ENCODE measurements at regions of chr22 and their contacts with region 1.

Region 1: GRCh38 chr22:37121887-37122591 is 12.5 kb upstream of the TMPRSS6 start:
- DNase-seq: peak; percentile 96
- ATAC-seq: peak; percentile 94
- H3K4me3 Mint-ChIP-seq: peak overlapping the region; percentile 79
- H3K27ac Mint-ChIP-seq: peak overlapping the region; percentile 98
- H3K4me1 Mint-ChIP-seq: peaks cover 76% of the 10 kb centered on the region
- H3K27me3 Mint-ChIP-seq: no peaks in the 10 kb centered on the region

Region 2: GRCh38 chr22:37060801-37061610 is 61.0 kb before region 1 on chr22:
- CTCF ChIA-PET with region 1: no interaction called
- POLR2A ChIA-PET with region 1: interaction called, 3 read pairs
- intact Hi-C with region 1: loop called in 1 of 2 experiments (anchors 1 kb)
- DNase-seq: peak; percentile 90
- ATAC-seq: peak; percentile 85
- H3K4me3 Mint-ChIP-seq: peak overlapping the region; percentile 66
- H3K27ac Mint-ChIP-seq: peak overlapping the region; percentile 80
- H3K4me1 Mint-ChIP-seq: peaks cover 34% of the 10 kb centered on the region
- H3K27me3 Mint-ChIP-seq: no peaks in the 10 kb centered on the region

Region 3: GRCh38 chr22:37095113-37095512 is 26.9 kb before region 1 on chr22:
- CTCF ChIA-PET with region 1: interaction called, 9 read pairs
- POLR2A ChIA-PET with region 1: interaction called, 7 read pairs
- intact Hi-C with region 1: loop called in 1 of 2 experiments (anchors 1 kb)
- DNase-seq: peak; percentile 87
- ATAC-seq: peak; percentile 87
- H3K4me3 Mint-ChIP-seq: no peak overlapping the region
- H3K27ac Mint-ChIP-seq: peak overlapping the region; percentile 79
- H3K4me1 Mint-ChIP-seq: peaks cover 31% of the 10 kb centered on the region
- H3K27me3 Mint-ChIP-seq: peaks cover 11% of the 10 kb centered on the region

Region 4: GRCh38 chr22:37148742-37149665 is 27.0 kb after region 1 on chr22:
- CTCF ChIA-PET with region 1: interaction called, 43 read pairs
- POLR2A ChIA-PET with region 1: interaction called, 49 read pairs
- intact Hi-C with region 1: loop called (anchors 1 kb)
- DNase-seq: no peak
- ATAC-seq: no peak
- H3K4me3 Mint-ChIP-seq: peak overlapping the region; percentile 84
- H3K27ac Mint-ChIP-seq: peak overlapping the region; percentile 91
- H3K4me1 Mint-ChIP-seq: peaks cover 56% of the 10 kb centered on the region
- H3K27me3 Mint-ChIP-seq: no peaks in the 10 kb centered on the region

Region 5: DNA sequence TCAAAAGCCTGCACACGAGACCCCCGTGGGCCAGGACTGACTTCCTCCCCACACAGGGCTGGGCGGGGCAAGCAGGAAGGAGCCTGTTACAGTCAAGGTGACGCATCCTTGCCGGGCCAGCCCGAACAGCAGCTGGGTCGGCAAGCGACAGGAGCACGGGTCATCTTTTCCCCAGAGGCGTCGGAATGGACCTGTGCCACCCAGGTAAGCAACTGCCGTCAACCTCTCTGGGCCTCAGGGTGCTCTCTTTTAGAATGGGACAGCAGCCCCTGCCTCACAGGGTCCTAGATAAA is 160.3 kb after region 1 on chr22 and contains the start of gene CYTH4:
- CTCF ChIA-PET with region 1: no interaction called
- POLR2A ChIA-PET with region 1: no interaction called
- intact Hi-C with region 1: loop called in 1 of 2 experiments (anchors 2 kb)
- DNase-seq: peak; percentile 93
- ATAC-seq: peak; percentile 87
- H3K4me3 Mint-ChIP-seq: peak within 1 kb of the TSS; percentile 82
- H3K27ac Mint-ChIP-seq: peak within 1 kb of the TSS; percentile 98
- H3K4me1 Mint-ChIP-seq: peaks cover 60% of the 10 kb centered on the region
- H3K27me3 Mint-ChIP-seq: no peaks in the 10 kb centered on the region
- total RNA-seq, gene CYTH4: 33.1 to 42.8 TPM